Dorsolateral prefrontal cortex (tissue), 120 donors: ENCODE measurements at regions of chr2 and their contacts with region 1.

Region 1: GRCh38 chr2:162118559-162119031 is 33.5 kb downstream of the GCG start:
- DNase-seq: peak in 9 of 10 donors; percentile 19 to 67 (median 58)
- H3K4me3 ChIP-seq: no peak overlapping the region
- H3K27ac ChIP-seq: peak overlapping the region in 42 of 59 donors; percentile 1 to 73 (median 48)
- H3K27me3 ChIP-seq: no peaks in the 10 kb centered on the region
- CTCF ChIP-seq: no peak

Region 2: GRCh38 chr2:161915098-161915497 is 203.5 kb before region 1 on chr2:
- intact Hi-C with region 1: no loop called
- DNase-seq: no peak
- H3K4me3 ChIP-seq: no peak overlapping the region
- H3K27ac ChIP-seq: no peak overlapping the region
- H3K27me3 ChIP-seq: no peaks in the 10 kb centered on the region
- CTCF ChIP-seq: no peak

Region 3: GRCh38 chr2:161995553-161996016 is 123.0 kb before region 1 on chr2:
- intact Hi-C with region 1: loop called in 1 of 2 experiments (anchors 5 kb)
- DNase-seq: no peak
- H3K4me3 ChIP-seq: no peak overlapping the region
- H3K27ac ChIP-seq: peak overlapping the region in 4 of 59 donors; percentile 4 to 45 (median 28)
- H3K27me3 ChIP-seq: no peaks in the 10 kb centered on the region
- CTCF ChIP-seq: no peak